ENCODE measurements at regions of chr19 and their contacts with region 1.

Region 1: DNA sequence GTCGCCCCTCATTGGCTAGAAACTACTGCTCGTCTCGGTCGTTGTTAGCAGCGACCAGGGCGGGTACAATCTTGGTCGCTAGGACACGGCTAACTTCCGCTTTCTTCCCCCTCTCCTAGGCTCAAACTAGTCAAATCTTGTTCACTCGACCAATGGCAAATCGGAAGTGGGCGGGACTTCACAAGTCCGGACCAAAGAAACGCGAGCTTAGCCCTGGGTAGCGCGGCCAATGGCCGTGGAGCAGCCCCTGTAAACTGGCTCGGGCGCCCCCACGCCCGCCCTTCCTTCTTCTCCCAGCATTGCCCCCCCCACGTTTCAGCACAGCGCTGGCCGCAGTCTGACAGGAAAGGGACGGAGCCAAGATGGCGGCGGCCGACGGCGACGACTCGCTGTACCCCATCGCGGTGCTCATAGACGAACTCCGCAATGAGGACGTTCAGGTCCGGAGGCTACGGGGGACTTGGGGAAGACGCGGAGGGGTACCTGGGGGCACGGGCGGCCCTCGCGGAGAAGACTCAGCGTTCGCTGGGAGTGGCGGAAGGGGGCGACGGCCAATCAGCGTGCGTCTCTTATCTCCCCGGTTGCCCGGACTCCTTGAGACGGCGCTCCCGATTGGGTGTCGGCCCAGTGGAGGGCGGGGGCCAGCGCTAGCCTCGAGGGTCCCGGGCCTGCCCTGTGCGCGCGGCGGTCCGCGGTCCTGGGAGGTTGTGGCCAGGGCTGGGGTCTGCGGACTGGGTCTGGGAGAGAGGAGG is at the start of gene PPP2R1A:
- DNase-seq: peak; percentile 96
- ATAC-seq: peak; percentile 78
- H3K4me3 Mint-ChIP-seq: peak within 1 kb of the TSS; percentile 95
- H3K27ac Mint-ChIP-seq: peak within 1 kb of the TSS; percentile 98
- H3K4me1 Mint-ChIP-seq: peaks cover 54% of the 10 kb centered on the region
- H3K27me3 Mint-ChIP-seq: no peaks in the 10 kb centered on the region
- CTCF ChIP-seq: no peak
- total RNA-seq, gene PPP2R1A: 244 and 245 TPM in 2 replicates

Region 2: GRCh38 chr19:51926784-51927742 is 262.8 kb before region 1 on chr19 and contains the start of gene ZNF613:
- CTCF ChIA-PET with region 1: no interaction called
- POLR2A ChIA-PET with region 1: no interaction called
- intact Hi-C with region 1: loop called (anchors 1 kb)
- DNase-seq: peak; percentile 71
- ATAC-seq: peak; percentile 94
- H3K4me3 Mint-ChIP-seq: peak within 1 kb of the TSS; percentile 100
- H3K27ac Mint-ChIP-seq: peak within 1 kb of the TSS; percentile 93
- H3K4me1 Mint-ChIP-seq: peaks cover 24% of the 10 kb centered on the region
- H3K27me3 Mint-ChIP-seq: no peaks in the 10 kb centered on the region
- CTCF ChIP-seq: no peak
- total RNA-seq, gene ZNF613: 7.7 and 7.8 TPM in 2 replicates

Region 3: GRCh38 chr19:52095172-52096014 is 94.5 kb before region 1 on chr19 and contains the start of gene ZNF841:
- CTCF ChIA-PET with region 1: no interaction called
- POLR2A ChIA-PET with region 1: interaction called, 10 read pairs
- intact Hi-C with region 1: loop called (anchors 5 kb)
- DNase-seq: peak; percentile 86
- ATAC-seq: peak; percentile 98
- H3K4me3 Mint-ChIP-seq: peak within 1 kb of the TSS; percentile 98
- H3K27ac Mint-ChIP-seq: peak within 1 kb of the TSS; percentile 94
- H3K4me1 Mint-ChIP-seq: peaks cover 30% of the 10 kb centered on the region
- H3K27me3 Mint-ChIP-seq: no peaks in the 10 kb centered on the region
- CTCF ChIP-seq: no peak
- total RNA-seq, gene ZNF841: 34.7 and 42.7 TPM in 2 replicates

Region 4: DNA sequence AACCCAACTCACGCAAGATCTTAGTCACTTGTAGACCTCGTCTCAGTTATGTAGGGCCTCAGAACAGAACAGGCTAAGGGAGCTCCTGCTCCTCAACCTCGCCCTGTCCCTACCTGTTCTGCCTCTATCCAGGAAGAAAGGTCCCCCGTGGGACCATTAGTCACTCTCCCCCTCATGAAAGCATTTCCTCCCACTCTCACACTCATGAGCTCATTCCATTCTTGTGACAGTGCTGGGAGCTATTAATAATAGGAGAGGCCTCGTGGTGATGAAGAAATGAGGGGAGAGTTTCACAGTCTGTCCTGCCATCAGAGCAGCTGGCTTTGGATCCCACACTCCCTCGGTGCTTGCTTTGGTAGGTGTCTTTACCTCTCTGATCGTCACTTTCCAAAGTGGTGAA is 10.1 kb after region 1 on chr19:
- CTCF ChIA-PET with region 1: no interaction called
- POLR2A ChIA-PET with region 1: interaction called, 14 read pairs
- intact Hi-C with region 1: no loop called
- DNase-seq: no peak
- ATAC-seq: peak; percentile 34
- H3K4me3 Mint-ChIP-seq: no peak overlapping the region
- H3K27ac Mint-ChIP-seq: no peak overlapping the region
- H3K4me1 Mint-ChIP-seq: peaks cover 36% of the 10 kb centered on the region
- H3K27me3 Mint-ChIP-seq: no peaks in the 10 kb centered on the region
- CTCF ChIP-seq: no peak

Region 5: GRCh38 chr19:52369559-52370340 is 179.8 kb after region 1 on chr19 and contains the start of gene ZNF880:
- CTCF ChIA-PET with region 1: no interaction called
- POLR2A ChIA-PET with region 1: interaction called, 24 read pairs
- intact Hi-C with region 1: no loop called
- DNase-seq: peak; percentile 86
- ATAC-seq: peak; percentile 98
- H3K4me3 Mint-ChIP-seq: peak within 1 kb of the TSS; percentile 95
- H3K27ac Mint-ChIP-seq: peak within 1 kb of the TSS; percentile 97
- H3K4me1 Mint-ChIP-seq: peaks cover 17% of the 10 kb centered on the region
- H3K27me3 Mint-ChIP-seq: no peaks in the 10 kb centered on the region
- CTCF ChIP-seq: no peak
- total RNA-seq, gene ZNF880: 28.0 and 29.5 TPM in 2 replicates

Region 6: GRCh38 chr19:52507266-52507665 is 317.4 kb after region 1 on chr19:
- CTCF ChIA-PET with region 1: no interaction called
- POLR2A ChIA-PET with region 1: no interaction called
- intact Hi-C with region 1: no loop called
- DNase-seq: no peak
- ATAC-seq: no peak
- H3K4me3 Mint-ChIP-seq: no peak overlapping the region
- H3K27ac Mint-ChIP-seq: no peak overlapping the region
- H3K4me1 Mint-ChIP-seq: no peaks in the 10 kb centered on the region
- H3K27me3 Mint-ChIP-seq: no peaks in the 10 kb centered on the region
- CTCF ChIP-seq: no peak

Region 7: GRCh38 chr19:52942386-52943133 is 752.6 kb after region 1 on chr19:
- CTCF ChIA-PET with region 1: no interaction called
- POLR2A ChIA-PET with region 1: no interaction called
- intact Hi-C with region 1: loop called (anchors 5 kb)
- DNase-seq: peak; percentile 98
- ATAC-seq: peak; percentile 99
- H3K4me3 Mint-ChIP-seq: peak overlapping the region; percentile 96
- H3K27ac Mint-ChIP-seq: peak overlapping the region; percentile 92
- H3K4me1 Mint-ChIP-seq: peaks cover 31% of the 10 kb centered on the region
- H3K27me3 Mint-ChIP-seq: no peaks in the 10 kb centered on the region
- CTCF ChIP-seq: no peak